PC-3 (cell line): ENCODE measurements at regions of chr1 and their contacts with region 1.

Region 1: GRCh38 chr1:56758135-56758534 is 61.1 kb downstream of the FYB2 start:
- DNase-seq: peak; percentile 54
- ATAC-seq: peak; percentile 49; the same call in 1 of the 2 replicates
- H3K4me3 ChIP-seq: no peak overlapping the region
- H3K27ac ChIP-seq: no peak overlapping the region
- H3K4me1 ChIP-seq: 0 out of 2 replicates have a peak, but pooled peaks cover 4% of the 10 kb centered on the region
- H3K27me3 ChIP-seq: no peaks in the 10 kb centered on the region
- CTCF ChIP-seq: peak; percentile 46

Region 2: DNA sequence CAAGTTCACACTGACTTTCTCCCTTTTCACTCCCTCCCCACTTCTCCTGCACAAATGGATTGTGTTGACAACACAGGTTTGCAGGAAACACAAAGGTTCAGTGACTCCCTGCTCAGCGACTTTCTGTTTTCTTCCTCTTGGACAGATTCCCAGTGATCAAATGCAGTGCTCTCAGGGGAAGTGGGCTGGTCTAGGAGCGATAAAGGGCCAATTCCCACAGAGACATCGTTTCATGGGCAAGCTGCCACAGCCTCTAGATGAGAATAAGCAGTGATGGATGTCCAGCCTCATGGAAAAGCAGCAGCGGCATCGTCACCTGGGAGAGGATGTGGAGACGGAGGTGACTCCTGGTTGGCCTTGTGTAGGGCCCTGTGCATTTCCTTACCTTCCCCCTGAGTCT is 30.5 kb after region 1 on chr1:
- CTCF ChIA-PET with region 1: interaction called, 11 read pairs
- POLR2A ChIA-PET with region 1: no interaction called
- intact Hi-C with region 1: no loop called
- DNase-seq: peak; percentile 6
- ATAC-seq: 0 out of 2 replicates have a peak, but pooled peaks have one; percentile 27
- H3K4me3 ChIP-seq: no peak overlapping the region
- H3K27ac ChIP-seq: no peak overlapping the region
- H3K4me1 ChIP-seq: no peaks in the 10 kb centered on the region
- H3K27me3 ChIP-seq: peaks cover 24% of the 10 kb centered on the region
- CTCF ChIP-seq: no peak